ENCODE measurements at regions of chr16 and their contacts with region 1.

Region 1: GRCh38 chr16:4452674-4453073 is 21.8 kb downstream of the NMRAL1 start:
- DNase-seq: no peak
- H3K4me3 ChIP-seq: no peak overlapping the region
- H3K4me3 Mint-ChIP-seq: no peak overlapping the region
- H3K27ac ChIP-seq: no peak overlapping the region
- H3K27ac Mint-ChIP-seq: peak overlapping the region in 2 of 8 donors; percentile 12 to 15
- H3K4me1 ChIP-seq: no peaks in the 10 kb centered on the region
- H3K4me1 Mint-ChIP-seq: peaks cover 0 to 4% (median 3%) of the 10 kb centered on the region in 3 donors
- H3K27me3 ChIP-seq: no peaks in the 10 kb centered on the region
- H3K27me3 Mint-ChIP-seq: no peaks in the 10 kb centered on the region

Region 2: DNA sequence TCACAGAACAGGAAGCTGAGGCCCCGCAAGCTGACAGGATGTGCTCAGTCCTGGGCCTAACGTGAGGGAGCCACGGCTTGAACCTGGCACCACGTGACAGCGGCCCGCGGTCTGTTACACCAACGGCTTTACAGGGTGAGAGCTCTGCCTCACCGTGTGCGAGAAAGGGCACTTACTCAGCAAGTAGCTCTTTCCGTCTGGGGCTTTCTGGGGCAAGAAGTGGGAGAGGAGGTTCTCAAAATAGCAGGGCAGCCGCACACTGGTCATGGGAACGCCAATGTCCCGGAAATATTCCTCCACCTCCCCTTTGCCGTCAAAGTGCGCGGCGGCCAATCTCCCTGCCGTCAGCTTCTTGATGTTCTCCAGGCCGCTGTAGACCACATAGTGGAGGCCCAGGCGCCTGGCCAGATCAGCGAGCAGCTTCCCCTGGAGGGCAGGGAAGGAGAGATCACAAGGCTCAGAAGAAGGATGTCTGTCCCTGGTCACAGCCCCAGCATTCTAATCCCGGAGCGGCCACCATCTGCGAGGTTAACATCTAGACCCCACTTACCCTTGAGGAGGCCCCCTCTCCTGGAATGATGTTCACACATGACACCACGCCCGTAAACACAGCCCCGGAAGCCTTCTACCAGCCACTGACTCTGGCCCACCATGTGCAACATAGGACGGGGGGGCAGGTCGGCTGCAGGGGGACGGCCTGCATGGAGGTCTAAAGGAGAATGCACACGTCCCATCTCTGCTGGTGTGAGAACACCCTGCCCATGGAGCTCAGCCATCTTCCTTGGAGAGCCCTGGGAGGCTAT is 13.5 kb after region 1 on chr16:
- CTCF ChIA-PET with region 1: interaction called, 3 read pairs
- POLR2A ChIA-PET with region 1: interaction called, 10 read pairs
- DNase-seq: peak in 4 of 5 donors; percentile 71 to 88 (median 74)
- H3K4me3 ChIP-seq: peak overlapping the region; percentile 22
- H3K4me3 Mint-ChIP-seq: peak overlapping the region; percentile 58 to 74 (median 69)
- H3K27ac ChIP-seq: peak overlapping the region; percentile 73
- H3K27ac Mint-ChIP-seq: peak overlapping the region; percentile 92 to 98 (median 96)
- H3K4me1 ChIP-seq: peaks cover 25% of the 10 kb centered on the region
- H3K4me1 Mint-ChIP-seq: peaks cover 23 to 31% (median 26%) of the 10 kb centered on the region in 3 donors
- H3K27me3 ChIP-seq: no peaks in the 10 kb centered on the region
- H3K27me3 Mint-ChIP-seq: no peaks in the 10 kb centered on the region